ENCODE measurements at regions of chr6 and their contacts with region 1.

Region 1: DNA sequence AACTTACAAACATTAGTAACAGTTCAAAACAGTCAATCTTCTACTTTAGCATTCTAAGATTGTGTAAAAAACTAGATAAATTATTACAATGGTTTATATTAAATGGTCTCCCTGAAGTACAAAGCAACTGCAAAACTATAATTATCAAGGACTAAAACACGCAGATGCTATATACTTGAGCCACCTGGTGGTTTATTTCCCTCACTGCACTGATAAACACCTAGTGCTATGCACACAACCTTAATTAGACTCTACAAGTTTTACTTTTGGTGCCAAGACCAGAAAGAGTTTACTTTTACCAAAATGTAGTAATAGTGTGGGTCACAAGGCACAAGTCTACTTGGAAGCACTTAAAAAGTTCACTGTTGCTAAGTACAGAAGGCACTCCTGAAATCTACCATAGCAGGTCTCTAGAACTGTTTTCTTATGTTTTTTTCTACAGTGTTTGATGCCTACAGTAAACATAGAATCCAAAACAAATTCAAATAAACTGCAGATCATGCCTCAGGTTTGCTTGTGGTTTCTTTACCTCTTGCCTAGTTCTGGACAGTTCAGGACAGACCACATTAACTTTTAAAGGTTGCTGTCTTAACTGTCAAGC is 49.2 kb downstream of the GMDS start:
- DNase-seq: peak; percentile 53
- H3K4me3 ChIP-seq: no peak overlapping the region
- H3K27ac ChIP-seq: no peak overlapping the region
- H3K4me1 ChIP-seq: no peaks in the 10 kb centered on the region
- H3K27me3 ChIP-seq: no peaks in the 10 kb centered on the region
- CTCF ChIP-seq: peak; percentile 60 to 64 (median 63)
- POLR2A ChIP-seq: no peak

Region 2: DNA sequence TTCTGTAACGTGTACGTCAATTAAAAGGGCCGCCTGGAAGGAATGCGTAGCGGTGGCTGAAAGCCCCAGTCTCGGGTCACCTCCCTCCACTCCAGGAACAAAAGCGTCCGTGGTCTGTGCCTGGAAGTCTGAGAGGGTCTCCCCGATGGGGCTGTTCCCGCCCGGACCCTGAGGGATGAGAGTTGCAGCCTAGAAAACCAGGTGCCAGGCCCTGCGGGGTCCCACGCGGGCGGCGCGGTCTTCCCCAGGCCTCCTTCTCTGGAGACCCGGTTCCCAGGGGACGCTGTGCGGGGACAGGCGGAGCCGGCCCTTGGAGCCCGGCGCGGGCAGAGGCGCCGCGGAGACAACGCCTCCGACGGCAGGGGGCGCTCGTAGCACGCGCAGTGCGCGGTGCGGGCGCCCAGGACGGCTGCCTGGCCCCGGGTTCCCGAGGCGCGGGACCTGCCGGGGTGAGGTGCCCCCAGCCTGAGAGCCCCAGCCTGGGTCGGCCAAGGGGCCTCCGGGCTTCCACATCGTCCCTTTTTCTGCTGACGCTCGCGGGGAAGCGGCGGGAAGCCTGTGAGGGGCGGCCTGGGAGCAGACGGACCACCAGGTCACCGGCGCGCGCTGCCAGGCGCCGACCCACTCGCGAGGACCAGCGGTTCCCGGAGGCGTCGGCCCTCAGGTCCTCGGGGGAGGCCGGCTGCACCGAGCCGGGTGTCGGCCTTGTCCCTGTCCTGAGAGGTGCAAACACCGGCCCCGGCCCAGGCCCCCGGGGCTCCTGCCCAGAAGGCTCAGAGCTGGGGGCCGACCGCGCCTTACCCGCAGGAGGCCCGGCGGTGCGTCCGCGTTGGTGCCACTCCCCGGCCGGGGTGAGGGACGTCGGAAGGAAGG is 591.8 kb before region 1 on chr6:
- intact Hi-C with region 1: loop called (anchors 5 kb)
- DNase-seq: peak; percentile 65
- H3K4me3 ChIP-seq: peak overlapping the region; percentile 36 to 40
- H3K27ac ChIP-seq: no peak overlapping the region
- H3K4me1 ChIP-seq: peaks cover 7% of the 10 kb centered on the region
- H3K27me3 ChIP-seq: no peaks in the 10 kb centered on the region
- CTCF ChIP-seq: peak; percentile 85 to 96 (median 91)
- POLR2A ChIP-seq: no peak

Region 3: DNA sequence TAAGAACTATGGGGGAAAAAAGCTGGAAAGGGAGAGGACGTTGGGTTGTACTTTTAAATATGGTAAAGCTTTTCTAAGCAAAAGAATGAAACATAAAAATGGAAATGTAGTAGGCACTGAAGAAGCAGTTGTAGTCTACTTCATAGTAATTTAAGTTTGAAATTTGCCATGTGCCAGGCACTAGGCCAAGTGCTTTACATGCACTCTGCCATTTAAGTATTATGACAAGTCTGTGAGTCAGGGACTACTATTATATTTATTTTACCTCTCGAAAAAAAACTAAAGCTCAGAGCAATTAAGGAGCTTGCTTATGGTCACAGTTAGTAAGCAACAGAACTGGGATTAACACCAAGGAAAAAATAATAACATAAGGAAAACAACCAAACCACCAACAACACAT is 208.5 kb before region 1 on chr6:
- intact Hi-C with region 1: no loop called
- DNase-seq: no peak
- H3K4me3 ChIP-seq: no peak overlapping the region
- H3K27ac ChIP-seq: no peak overlapping the region
- H3K4me1 ChIP-seq: no peaks in the 10 kb centered on the region
- H3K27me3 ChIP-seq: no peaks in the 10 kb centered on the region
- CTCF ChIP-seq: no peak
- POLR2A ChIP-seq: no peak